ENCODE measurements at regions of chr1 and their contacts with region 1.

Region 1: GRCh38 chr1:26321315-26322041 is 3.7 kb downstream of the CD52 start:
- DNase-seq: peak; percentile 92
- ATAC-seq: peak; percentile 98
- H3K4me3 ChIP-seq: no peak overlapping the region
- H3K27ac ChIP-seq: no peak overlapping the region
- H3K4me1 ChIP-seq: no peaks in the 10 kb centered on the region
- H3K27me3 ChIP-seq: no peaks in the 10 kb centered on the region
- CTCF ChIP-seq: peak; percentile 88

Region 2: GRCh38 chr1:26169669-26170471 is 151.6 kb before region 1 on chr1 and contains the start of gene ZNF593:
- CTCF ChIA-PET with region 1: no interaction called
- POLR2A ChIA-PET with region 1: no interaction called
- intact Hi-C with region 1: loop called (anchors 1 kb)
- DNase-seq: peak; percentile 92
- ATAC-seq: peak; percentile 95
- H3K4me3 ChIP-seq: peak within 1 kb of the TSS; percentile 98
- H3K27ac ChIP-seq: peak within 1 kb of the TSS; percentile 72
- H3K4me1 ChIP-seq: peaks cover 11% of the 10 kb centered on the region
- H3K27me3 ChIP-seq: no peaks in the 10 kb centered on the region
- CTCF ChIP-seq: peak; percentile 81
- total RNA-seq, gene ZNF593: 155 and 165 TPM in 2 replicates

Region 3: DNA sequence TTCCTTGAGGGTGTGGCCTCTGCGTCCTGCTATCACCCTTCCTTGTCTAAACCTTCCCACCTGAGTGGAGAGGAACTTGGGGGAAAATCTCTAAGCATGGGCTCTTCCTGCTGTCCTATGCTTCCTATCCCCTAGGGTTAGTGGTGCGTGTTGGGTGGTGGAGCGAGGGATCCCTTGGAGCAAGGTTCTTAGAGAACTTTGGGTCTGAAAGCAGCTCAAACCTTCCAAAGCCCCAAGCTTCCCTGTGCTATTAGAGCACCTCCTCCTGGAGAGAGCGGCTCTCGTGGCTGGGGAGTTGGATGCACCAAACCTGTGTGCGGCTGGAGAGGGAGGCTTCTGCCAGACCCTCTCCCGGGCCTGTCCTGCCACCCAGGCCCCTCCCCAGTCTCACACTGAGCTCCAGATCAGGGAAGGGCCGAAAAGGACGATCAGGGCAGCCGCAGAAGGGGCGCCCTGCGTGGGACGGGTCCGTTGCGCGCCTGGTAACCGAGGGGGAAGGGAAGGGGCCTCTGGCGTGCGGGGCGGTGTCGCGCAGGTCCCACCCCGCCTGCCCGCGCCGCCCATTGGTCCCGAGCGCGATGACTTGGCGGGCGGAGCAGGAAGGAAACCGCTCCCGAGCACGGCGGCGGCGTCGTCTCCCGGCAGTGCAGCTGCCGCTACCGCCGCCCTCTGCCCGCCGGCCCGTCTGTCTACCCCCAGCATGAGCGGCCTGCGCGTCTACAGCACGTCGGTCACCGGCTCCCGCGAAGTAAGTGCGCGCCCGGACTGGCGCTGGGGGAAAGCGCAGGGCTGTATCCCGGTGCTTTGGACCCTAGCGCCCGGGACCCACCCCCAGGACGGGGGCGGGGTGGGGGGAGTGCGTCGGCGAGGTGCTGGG is 41.8 kb before region 1 on chr1 and contains the start of gene SH3BGRL3:
- CTCF ChIA-PET with region 1: interaction called, 6 read pairs
- POLR2A ChIA-PET with region 1: no interaction called
- intact Hi-C with region 1: loop called (anchors 1 kb)
- DNase-seq: peak; percentile 87
- ATAC-seq: peak; percentile 38
- H3K4me3 ChIP-seq: peak within 1 kb of the TSS; percentile 75
- H3K27ac ChIP-seq: peak within 1 kb of the TSS; percentile 99
- H3K4me1 ChIP-seq: peaks cover 84% of the 10 kb centered on the region
- H3K27me3 ChIP-seq: no peaks in the 10 kb centered on the region
- CTCF ChIP-seq: peak; percentile 56
- total RNA-seq, gene SH3BGRL3: 181 and 193 TPM in 2 replicates

Region 4: DNA sequence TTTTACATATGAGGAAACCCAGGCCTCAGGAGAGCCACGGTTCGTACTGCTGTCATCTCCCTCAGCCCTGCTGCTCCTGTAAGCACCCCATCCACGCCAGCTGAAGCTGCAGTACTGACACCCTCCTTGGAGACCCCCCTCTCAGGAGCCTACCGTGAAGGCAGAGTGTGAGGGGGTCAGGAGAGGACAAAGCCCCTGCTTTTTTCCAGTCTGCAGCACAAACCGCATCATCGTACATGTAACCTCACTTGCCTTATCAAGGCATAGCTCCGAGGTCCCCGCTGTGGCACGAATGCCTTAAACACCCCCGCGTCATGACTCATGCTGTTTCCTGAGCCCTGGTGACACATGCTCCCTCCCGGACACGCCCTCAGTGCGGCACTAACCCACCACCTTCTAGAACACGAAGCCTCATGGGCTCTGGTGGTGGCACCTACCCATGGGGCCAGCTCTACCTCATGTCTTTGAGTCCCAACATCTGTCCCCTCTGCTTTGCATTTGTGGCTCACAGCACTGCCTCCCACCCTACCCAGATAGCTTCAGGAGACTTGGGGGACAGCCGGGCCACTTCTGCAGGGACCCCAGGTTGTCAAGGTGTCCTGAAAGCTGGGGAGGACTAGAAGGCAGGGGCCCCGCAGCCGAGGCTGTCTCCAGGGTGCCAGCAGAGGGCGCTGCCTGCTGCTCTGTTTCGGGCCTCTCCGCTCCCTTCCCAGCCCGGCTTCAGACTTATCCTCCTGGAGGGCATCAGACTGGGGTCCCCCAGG is 36.7 kb before region 1 on chr1:
- CTCF ChIA-PET with region 1: interaction called, 4 read pairs
- POLR2A ChIA-PET with region 1: interaction called, 4 read pairs
- intact Hi-C with region 1: loop called (anchors 2 kb)
- DNase-seq: peak; percentile 97
- ATAC-seq: peak; percentile 57
- H3K4me3 ChIP-seq: no peak overlapping the region
- H3K27ac ChIP-seq: peak overlapping the region; percentile 77
- H3K4me1 ChIP-seq: peaks cover 40% of the 10 kb centered on the region
- H3K27me3 ChIP-seq: no peaks in the 10 kb centered on the region
- CTCF ChIP-seq: peak; percentile 67

Region 5: GRCh38 chr1:26306290-26307229 is 14.9 kb before region 1 on chr1 and contains the start of gene UBXN11:
- CTCF ChIA-PET with region 1: no interaction called
- POLR2A ChIA-PET with region 1: no interaction called
- intact Hi-C with region 1: loop called (anchors 2 kb)
- DNase-seq: peak; percentile 98
- ATAC-seq: peak; percentile 98
- H3K4me3 ChIP-seq: peak within 1 kb of the TSS; percentile 88
- H3K27ac ChIP-seq: peak within 1 kb of the TSS; percentile 22
- H3K4me1 ChIP-seq: peaks cover 32% of the 10 kb centered on the region
- H3K27me3 ChIP-seq: no peaks in the 10 kb centered on the region
- CTCF ChIP-seq: no peak
- total RNA-seq, gene UBXN11: 19.4 and 24.6 TPM in 2 replicates

Region 6: DNA sequence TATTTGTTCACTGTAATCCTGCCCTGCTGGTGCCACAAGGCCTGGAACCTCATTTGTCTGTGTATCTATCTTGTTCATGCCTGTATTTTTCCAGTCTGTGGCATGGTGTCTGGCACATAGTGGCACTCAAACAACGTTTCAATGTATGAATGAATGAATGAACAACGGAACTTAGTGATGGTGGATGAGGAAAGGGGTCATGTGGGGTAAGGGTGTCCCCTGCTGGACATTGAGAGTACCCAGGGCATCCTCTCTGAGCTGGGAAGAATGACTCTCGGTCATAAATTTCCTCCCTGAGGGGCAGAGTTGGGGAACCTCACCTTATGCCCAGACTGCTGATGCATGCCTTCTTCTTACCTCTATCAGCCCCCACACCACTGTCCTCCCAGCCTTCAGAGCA is 70.0 kb after region 1 on chr1:
- CTCF ChIA-PET with region 1: interaction called, 6 read pairs
- POLR2A ChIA-PET with region 1: no interaction called
- intact Hi-C with region 1: loop called (anchors 1 kb)
- DNase-seq: peak; percentile 73
- ATAC-seq: peak; percentile 79
- H3K4me3 ChIP-seq: no peak overlapping the region
- H3K27ac ChIP-seq: no peak overlapping the region
- H3K4me1 ChIP-seq: peaks cover 20% of the 10 kb centered on the region
- H3K27me3 ChIP-seq: no peaks in the 10 kb centered on the region
- CTCF ChIP-seq: peak; percentile 91

Measured in PC-3 (cell line).